ENCODE measurements at regions of chr21 and their contacts with region 1.

Region 1: GRCh38 chr21:39137248-39138178 is 45.7 kb downstream of the PSMG1 start:
- DNase-seq: no peak
- H3K4me3 ChIP-seq: no peak overlapping the region
- CTCF ChIP-seq: peak; percentile 5

Region 2: GRCh38 chr21:38505654-38506515 is 631.6 kb before region 1 on chr21:
- CTCF ChIA-PET with region 1: interaction called, 14 read pairs
- POLR2A ChIA-PET with region 1: no interaction called
- DNase-seq: peak; percentile 38
- H3K4me3 ChIP-seq: no peak overlapping the region
- CTCF ChIP-seq: peak; percentile 67

Region 3: GRCh38 chr21:38669176-38669575 is 468.3 kb before region 1 on chr21:
- CTCF ChIA-PET with region 1: interaction called, 33 read pairs
- POLR2A ChIA-PET with region 1: no interaction called
- DNase-seq: no peak
- H3K4me3 ChIP-seq: no peak overlapping the region
- CTCF ChIP-seq: peak; percentile 41

Region 4: DNA sequence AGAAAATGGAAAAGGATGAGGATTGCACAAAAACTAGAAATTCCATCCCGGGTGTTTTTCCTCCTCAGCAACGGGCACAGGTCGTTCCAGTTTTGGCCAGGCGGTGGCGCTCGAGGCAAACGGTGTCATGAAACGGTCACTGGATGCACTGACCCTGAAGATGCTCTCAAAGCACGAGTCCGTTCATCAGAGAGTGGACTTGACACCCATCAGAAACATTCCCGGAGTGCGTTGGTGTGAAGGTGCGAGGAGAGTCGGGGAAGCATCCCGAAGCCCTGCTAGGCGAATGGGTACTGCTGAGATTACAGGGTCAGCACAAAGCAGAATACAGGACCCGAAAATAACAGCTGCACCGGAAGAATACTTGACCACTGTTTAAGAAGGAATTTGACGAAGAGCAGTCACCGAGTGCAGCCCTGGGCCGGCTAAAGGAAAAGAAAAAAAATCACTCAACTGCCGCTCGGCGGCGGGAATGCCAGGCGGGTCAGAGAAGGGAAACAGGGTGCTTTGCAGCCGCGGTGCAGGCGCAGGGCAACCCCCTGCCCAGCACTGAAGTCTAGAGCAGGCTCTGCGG is 403.5 kb before region 1 on chr21:
- CTCF ChIA-PET with region 1: interaction called, 102 read pairs
- POLR2A ChIA-PET with region 1: no interaction called
- DNase-seq: peak; percentile 5
- H3K4me3 ChIP-seq: peak overlapping the region; percentile 55
- CTCF ChIP-seq: peak; percentile 95

Region 5: GRCh38 chr21:38805328-38806152 is 332.0 kb before region 1 on chr21 and contains the start of gene ETS2:
- CTCF ChIA-PET with region 1: interaction called, 14 read pairs
- POLR2A ChIA-PET with region 1: no interaction called
- DNase-seq: peak; percentile 57
- H3K4me3 ChIP-seq: peak within 1 kb of the TSS; percentile 80
- CTCF ChIP-seq: peak; percentile 22

Region 6: DNA sequence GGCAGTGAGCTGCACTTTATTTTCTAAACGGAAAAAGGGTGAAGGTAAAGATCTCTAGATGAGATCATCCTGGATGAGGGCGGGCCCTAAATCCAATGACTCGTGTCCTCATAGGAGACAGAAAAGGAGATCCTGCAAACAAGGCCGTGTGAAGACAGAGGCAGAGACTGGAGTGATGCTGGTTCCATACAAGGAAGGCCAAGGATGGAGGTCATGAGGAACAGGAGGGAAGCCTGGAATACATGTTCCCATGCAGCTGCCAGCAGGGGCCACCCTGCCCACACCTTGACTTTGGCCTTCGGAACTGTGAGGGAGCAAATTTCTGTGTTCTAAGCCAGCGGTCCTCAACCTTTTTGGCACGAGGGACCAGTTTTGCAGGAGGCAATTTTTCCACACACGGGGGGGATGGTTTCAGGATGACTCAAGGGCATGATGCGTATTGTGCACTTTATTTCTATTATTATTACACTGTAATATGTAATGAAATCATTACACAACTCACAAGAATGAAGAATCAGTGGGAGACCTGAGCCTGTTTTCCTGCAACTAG is 48.6 kb before region 1 on chr21:
- CTCF ChIA-PET with region 1: no interaction called
- POLR2A ChIA-PET with region 1: no interaction called
- DNase-seq: no peak
- H3K4me3 ChIP-seq: no peak overlapping the region
- CTCF ChIP-seq: no peak

Region 7: DNA sequence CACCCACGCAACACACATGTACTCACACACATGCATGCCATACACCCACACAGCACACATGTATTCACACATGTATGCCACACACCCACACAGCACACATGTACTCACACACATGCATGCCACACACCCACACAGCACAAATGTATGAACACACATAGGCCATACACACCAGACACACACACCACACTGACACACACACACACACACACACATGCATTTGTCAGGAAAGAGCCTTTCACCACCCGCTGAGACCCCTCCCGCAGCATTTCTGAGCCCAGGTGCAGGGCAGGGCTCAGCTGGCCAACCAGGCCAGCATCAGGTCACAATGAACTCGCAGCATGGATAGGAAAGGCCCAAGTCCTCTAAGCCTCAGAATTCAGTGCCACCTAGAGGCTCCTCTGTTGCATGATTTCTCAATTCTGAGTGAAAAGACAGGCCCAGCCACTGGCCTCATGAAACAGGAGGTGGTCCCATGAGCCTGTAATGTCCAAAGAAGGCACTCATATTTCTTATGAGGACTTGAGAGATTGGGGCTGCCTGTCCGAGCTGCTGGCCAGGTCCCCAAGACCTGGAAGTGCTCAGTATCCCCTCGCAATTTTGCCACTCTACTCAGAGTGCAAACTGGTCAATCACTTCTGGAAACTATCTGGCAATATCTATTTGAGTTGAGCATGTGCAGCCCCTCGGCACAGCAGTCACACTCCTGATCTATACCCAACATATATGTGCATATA is 11.6 kb before region 1 on chr21:
- CTCF ChIA-PET with region 1: interaction called, 11 read pairs
- POLR2A ChIA-PET with region 1: no interaction called
- DNase-seq: no peak
- H3K4me3 ChIP-seq: no peak overlapping the region
- CTCF ChIP-seq: peak; percentile 74

Region 8: GRCh38 chr21:39153373-39153772 is 15.9 kb after region 1 on chr21:
- CTCF ChIA-PET with region 1: interaction called, 15 read pairs
- POLR2A ChIA-PET with region 1: no interaction called
- DNase-seq: no peak
- H3K4me3 ChIP-seq: no peak overlapping the region
- CTCF ChIP-seq: peak; percentile 48

Region 9: GRCh38 chr21:39564200-39564599 is 426.7 kb after region 1 on chr21:
- CTCF ChIA-PET with region 1: no interaction called
- POLR2A ChIA-PET with region 1: no interaction called
- DNase-seq: no peak
- H3K4me3 ChIP-seq: no peak overlapping the region
- CTCF ChIP-seq: no peak